ENCODE measurements at regions of chr4 and their contacts with region 1.

Region 1: DNA sequence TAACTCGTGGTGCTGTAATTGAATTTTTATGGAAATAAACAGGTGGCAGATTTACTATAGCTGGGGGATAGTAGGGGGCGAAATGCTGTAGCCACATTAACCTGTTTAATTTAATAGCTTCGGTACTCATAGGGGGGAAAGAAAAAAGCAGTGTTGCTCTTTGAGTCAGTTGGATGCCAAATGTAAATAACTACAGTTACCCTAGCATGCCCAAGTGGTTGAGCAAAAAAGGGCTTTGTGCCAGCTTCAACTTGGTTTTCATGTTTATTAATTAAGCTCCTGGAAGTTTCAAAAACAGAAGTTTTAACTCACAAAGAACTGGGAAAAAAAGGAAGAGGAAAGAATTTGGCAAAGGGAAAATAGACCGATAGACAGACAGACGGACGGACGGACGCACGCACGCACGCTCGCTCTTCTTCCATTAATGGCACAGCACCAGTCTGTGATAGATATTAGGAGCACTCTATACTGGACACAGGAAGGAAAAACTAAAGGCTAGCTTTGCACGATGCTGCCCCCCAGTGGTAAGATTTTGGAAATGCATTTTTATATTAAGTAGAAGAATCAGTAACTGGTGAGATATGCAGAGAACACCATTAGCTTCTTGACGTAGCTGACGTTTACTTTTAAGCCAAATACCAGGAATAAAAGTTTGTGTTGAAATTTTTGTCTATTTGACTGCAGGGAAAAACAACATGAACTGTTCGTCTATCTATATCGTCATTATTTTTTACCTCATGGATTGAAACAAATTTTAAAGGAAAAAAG is 151.8 kb downstream of the SLC7A11 start:
- DNase-seq: peak in 1 of 2 donors; percentile 15
- ATAC-seq: peak; percentile 70 to 85 (median 76)
- H3K4me3 ChIP-seq: peak overlapping the region; percentile 50
- H3K27ac ChIP-seq: no peak overlapping the region
- H3K4me1 ChIP-seq: peaks cover 14% of the 10 kb centered on the region
- H3K27me3 ChIP-seq: no peaks in the 10 kb centered on the region
- CTCF ChIP-seq: peak; percentile 79

Region 2: DNA sequence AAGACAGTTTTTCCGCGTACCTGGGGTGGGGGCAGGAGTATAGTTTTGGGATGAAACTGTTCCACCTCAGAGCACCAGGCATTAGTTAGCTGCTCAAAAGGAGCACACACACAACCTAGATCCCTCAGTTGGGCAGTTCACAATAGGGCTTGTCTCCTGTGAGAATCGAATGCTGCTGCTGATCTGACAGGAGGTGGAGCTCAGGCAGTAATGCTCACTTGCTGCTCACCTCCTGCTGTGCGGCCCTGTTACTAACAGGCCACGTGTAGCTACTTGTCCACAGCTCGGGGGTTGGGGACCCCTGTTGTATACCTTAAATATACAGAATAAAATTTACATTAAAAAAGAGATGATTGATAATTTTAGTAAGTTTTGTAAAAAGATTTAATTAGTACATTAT is 39.7 kb before region 1 on chr4:
- intact Hi-C with region 1: no loop called
- DNase-seq: no peak
- ATAC-seq: no peak
- H3K4me3 ChIP-seq: no peak overlapping the region
- H3K27ac ChIP-seq: no peak overlapping the region
- H3K4me1 ChIP-seq: no peaks in the 10 kb centered on the region
- H3K27me3 ChIP-seq: no peaks in the 10 kb centered on the region
- CTCF ChIP-seq: no peak

Region 3: GRCh38 chr4:138182838-138183426 is 92.6 kb after region 1 on chr4:
- intact Hi-C with region 1: loop called in 1 of 2 experiments (anchors 5 kb)
- DNase-seq: no peak
- ATAC-seq: peak; percentile 48 to 89 (median 74)
- H3K4me3 ChIP-seq: no peak overlapping the region
- H3K27ac ChIP-seq: no peak overlapping the region
- H3K4me1 ChIP-seq: peaks cover 19% of the 10 kb centered on the region
- H3K27me3 ChIP-seq: no peaks in the 10 kb centered on the region
- CTCF ChIP-seq: peak; percentile 76

Measured in psoas muscle (tissue), 8 donors.